ENCODE measurements at regions of chr1 and their contacts with region 1.

Region 1: GRCh38 chr1:167635156-167635648 is 5.2 kb downstream of the RCSD1 start:
- DNase-seq: no peak
- ATAC-seq: no peak
- H3K4me3 Mint-ChIP-seq: peak overlapping the region in 8 of 10 donors; percentile 15 to 97 (median 62)
- H3K27ac Mint-ChIP-seq: peak overlapping the region in 6 of 10 donors; percentile 34 to 100 (median 64)
- H3K4me1 Mint-ChIP-seq: peaks cover 41 to 93% (median 90%) of the 10 kb centered on the region in 4 donors
- H3K27me3 Mint-ChIP-seq: no peaks in the 10 kb centered on the region

Region 2: GRCh38 chr1:167650269-167651160 is 15.3 kb after region 1 on chr1:
- POLR2A ChIA-PET with region 1: interaction called, 12 read pairs
- DNase-seq: no peak
- ATAC-seq: peak; percentile 52 to 57
- H3K4me3 Mint-ChIP-seq: peak overlapping the region; percentile 45 to 86 (median 74)
- H3K27ac Mint-ChIP-seq: peak overlapping the region; percentile 88 to 97 (median 93)
- H3K4me1 Mint-ChIP-seq: peaks cover 59 to 95% (median 91%) of the 10 kb centered on the region in 4 donors
- H3K27me3 Mint-ChIP-seq: no peaks in the 10 kb centered on the region

Region 3: GRCh38 chr1:167687919-167688519 is 52.8 kb after region 1 on chr1:
- POLR2A ChIA-PET with region 1: interaction called, 15 read pairs
- DNase-seq: peak; percentile 57 to 87 (median 77)
- ATAC-seq: peak; percentile 75 to 83
- H3K4me3 Mint-ChIP-seq: peak overlapping the region in 2 of 10 donors; percentile 23 to 45
- H3K27ac Mint-ChIP-seq: peak overlapping the region; percentile 29 to 89 (median 72)
- H3K4me1 Mint-ChIP-seq: peaks cover 15 to 38% (median 30%) of the 10 kb centered on the region in 4 donors
- H3K27me3 Mint-ChIP-seq: no peaks in the 10 kb centered on the region